ENCODE measurements at regions of chr1 and their contacts with region 1.

Region 1: GRCh38 chr1:2586154-2587070 is at the start of gene PRXL2B:
- DNase-seq: peak; percentile 100
- ATAC-seq: peak; percentile 75
- H3K4me3 Mint-ChIP-seq: peak within 1 kb of the TSS; percentile 95
- H3K27ac Mint-ChIP-seq: peak within 1 kb of the TSS; percentile 96
- H3K4me1 Mint-ChIP-seq: peaks cover 30% of the 10 kb centered on the region
- H3K27me3 Mint-ChIP-seq: no peaks in the 10 kb centered on the region
- total RNA-seq, gene PRXL2B: 37.3 to 37.6 TPM

Region 2: GRCh38 chr1:2412519-2413233 is 173.7 kb before region 1 on chr1 and contains the start of gene PEX10:
- POLR2A ChIA-PET with region 1: interaction called, 18 read pairs
- DNase-seq: peak; percentile 100
- ATAC-seq: peak; percentile 75
- H3K4me3 Mint-ChIP-seq: peak within 1 kb of the TSS; percentile 92
- H3K27ac Mint-ChIP-seq: peak within 1 kb of the TSS; percentile 90
- H3K4me1 Mint-ChIP-seq: peaks cover 29% of the 10 kb centered on the region
- H3K27me3 Mint-ChIP-seq: no peaks in the 10 kb centered on the region
- total RNA-seq, gene PEX10: 9.6 to 9.9 TPM

Region 3: GRCh38 chr1:2492056-2492455 is 94.4 kb before region 1 on chr1:
- POLR2A ChIA-PET with region 1: no interaction called
- DNase-seq: no peak
- ATAC-seq: no peak
- H3K4me3 Mint-ChIP-seq: no peak overlapping the region
- H3K27ac Mint-ChIP-seq: no peak overlapping the region
- H3K4me1 Mint-ChIP-seq: peaks cover 11% of the 10 kb centered on the region
- H3K27me3 Mint-ChIP-seq: no peaks in the 10 kb centered on the region

Region 4: DNA sequence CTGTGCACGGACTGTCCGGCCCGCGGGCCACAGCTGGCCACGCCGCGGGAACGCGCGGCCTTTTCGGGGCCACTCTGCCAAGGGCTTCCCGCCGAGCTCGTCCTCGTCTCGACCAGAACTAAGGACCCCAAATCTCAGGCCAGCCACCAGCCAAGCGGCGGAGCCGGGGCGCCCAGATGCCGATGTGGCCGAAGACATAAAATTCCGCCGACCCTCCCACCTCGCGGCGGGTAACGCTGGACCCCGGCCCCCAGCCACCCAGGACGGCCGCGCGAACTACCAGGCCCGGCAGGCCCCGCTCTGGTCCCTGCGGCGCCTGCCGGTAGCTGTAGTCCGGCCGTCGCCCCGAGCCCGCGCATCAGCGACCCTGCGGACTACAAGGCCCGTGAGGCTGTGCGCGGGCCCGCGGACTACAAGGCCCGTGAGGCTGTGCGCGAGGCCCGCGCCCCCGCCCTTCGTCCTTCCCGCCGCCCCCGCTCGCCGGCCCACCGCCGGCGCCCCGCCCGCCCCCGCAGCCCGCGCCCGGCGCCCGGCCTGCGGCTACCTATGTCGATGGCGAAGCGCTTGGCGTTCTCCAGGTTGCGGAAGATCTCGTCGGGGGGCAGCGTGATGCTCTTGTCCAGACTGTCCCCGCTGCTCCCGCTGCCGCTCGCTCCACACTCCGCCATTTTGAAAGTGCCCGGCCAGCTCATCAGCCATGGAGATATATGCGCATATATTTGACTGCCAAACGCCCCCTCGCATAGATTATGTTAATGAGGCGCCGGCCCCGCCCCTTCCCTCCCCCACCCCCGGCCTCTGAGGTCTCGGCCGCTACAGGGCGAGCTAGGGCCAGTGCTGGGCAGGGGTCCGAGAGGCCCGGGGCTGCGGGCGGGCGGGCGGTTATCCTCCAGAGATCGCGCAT is 60.2 kb before region 1 on chr1 and contains the start of gene PANK4:
- POLR2A ChIA-PET with region 1: interaction called, 38 read pairs
- DNase-seq: peak; percentile 92
- ATAC-seq: peak; percentile 85
- H3K4me3 Mint-ChIP-seq: peak within 1 kb of the TSS; percentile 86
- H3K27ac Mint-ChIP-seq: peak within 1 kb of the TSS; percentile 96
- H3K4me1 Mint-ChIP-seq: peaks cover 35% of the 10 kb centered on the region
- H3K27me3 Mint-ChIP-seq: peaks cover 16% of the 10 kb centered on the region
- total RNA-seq, gene PANK4: 86.5 to 88.9 TPM

Region 5: DNA sequence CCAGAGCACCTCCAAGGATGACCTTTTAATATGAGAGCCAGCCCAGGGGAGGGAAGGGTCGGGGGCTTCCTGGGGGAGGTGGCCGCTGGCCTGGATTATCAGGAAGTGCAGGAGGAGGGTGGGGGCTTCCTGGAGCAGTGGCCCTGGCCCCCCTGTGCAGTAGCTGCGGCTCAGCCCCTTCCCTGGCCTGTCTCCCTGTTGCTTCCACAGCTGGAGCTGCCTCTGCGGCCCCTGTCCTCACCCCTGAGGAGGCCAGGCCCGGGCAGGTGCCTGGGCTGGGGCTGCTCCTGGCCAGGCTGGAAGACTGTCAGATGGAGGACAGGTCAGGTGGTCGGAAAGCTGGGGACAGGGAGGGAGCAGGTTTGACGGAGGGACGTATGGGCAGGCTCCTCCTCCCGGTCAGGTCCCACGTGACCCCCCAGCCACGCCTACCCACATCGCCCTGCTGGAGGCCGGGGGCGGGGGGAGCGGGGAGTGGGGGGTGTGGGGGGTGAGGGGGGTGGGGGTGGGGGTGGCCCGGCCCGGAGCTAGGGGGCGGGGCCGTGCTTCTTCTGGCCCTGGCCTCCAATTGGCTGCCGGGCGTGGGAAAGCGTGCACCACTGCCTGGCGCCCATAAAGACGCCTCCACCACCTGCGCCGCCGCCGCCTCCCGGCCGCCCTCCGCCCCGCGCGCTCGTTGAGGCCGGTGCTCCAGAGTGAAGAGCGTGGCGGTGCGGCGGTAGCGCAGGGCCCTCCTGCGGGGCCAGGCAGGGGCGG is 40.5 kb before region 1 on chr1:
- POLR2A ChIA-PET with region 1: interaction called, 97 read pairs
- DNase-seq: peak; percentile 91
- ATAC-seq: peak; percentile 37
- H3K4me3 Mint-ChIP-seq: peak overlapping the region; percentile 91
- H3K27ac Mint-ChIP-seq: peak overlapping the region; percentile 96
- H3K4me1 Mint-ChIP-seq: peaks cover 9% of the 10 kb centered on the region
- H3K27me3 Mint-ChIP-seq: peaks cover 5% of the 10 kb centered on the region

Region 6: DNA sequence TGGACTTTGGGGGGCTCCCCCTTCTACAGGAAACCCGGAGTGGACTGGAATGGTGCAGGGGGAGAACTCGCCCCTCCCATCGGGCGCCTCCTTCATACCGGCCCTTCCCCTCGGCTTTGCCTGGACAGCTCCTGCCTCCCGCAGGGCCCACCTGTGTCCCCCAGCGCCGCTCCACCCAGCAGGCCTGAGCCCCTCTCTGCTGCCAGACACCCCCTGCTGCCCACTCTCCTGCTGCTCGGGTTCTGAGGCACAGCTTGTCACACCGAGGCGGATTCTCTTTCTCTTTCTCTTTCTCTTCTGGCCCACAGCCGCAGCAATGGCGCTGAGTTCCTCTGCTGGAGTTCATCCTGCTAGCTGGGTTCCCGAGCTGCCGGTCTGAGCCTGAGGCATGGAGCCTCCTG is 30.1 kb before region 1 on chr1 and contains the start of gene TNFRSF14:
- POLR2A ChIA-PET with region 1: interaction called, 231 read pairs
- DNase-seq: peak; percentile 79
- ATAC-seq: peak; percentile 68
- H3K4me3 Mint-ChIP-seq: peak within 1 kb of the TSS; percentile 98
- H3K27ac Mint-ChIP-seq: peak within 1 kb of the TSS; percentile 99
- H3K4me1 Mint-ChIP-seq: peaks cover 21% of the 10 kb centered on the region
- H3K27me3 Mint-ChIP-seq: no peaks in the 10 kb centered on the region
- total RNA-seq, gene TNFRSF14: 131 to 134 TPM

Region 7: DNA sequence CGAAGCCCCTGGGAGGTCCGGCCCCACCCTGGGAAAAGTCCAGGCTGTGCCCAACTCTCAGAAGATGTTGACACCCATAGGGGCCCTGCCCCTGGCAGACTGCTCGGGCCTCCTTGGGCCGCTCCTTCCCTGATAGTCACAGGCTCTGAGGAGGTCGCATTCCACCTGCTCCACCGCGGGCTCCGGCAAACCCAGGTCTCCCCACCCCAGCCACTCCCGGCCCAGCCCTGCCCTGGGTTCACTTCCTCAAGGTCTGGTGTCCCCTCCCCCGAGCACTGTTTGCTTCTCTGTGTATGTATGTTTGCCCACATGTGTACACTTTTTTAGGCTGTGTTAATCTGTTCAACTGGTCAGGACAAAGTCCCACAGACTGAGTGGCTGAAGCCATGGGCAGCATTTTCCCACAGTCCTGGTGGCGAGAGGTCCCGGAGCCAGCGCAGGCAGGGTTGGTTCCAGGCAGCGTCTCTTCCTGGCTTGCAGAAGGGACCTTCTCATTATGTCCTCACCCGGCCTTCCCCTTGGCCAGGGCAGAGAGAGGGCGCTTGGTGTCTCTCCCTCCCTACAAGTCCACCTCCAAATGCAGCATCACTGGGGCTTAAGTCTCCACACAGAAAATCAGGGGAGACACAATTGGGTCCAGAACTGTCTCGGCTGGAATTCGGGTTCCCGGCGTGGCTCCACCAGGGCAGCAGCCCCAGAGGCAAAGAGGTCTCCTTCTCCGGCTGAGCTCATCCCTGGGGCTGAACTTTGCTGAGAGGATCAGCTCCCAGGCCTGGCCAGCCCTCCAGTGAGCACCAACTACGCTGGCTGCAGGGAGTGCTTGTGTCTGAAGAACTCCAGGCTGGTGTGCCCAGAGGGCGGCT is 10.4 kb before region 1 on chr1:
- POLR2A ChIA-PET with region 1: interaction called, 10 read pairs
- DNase-seq: no peak
- ATAC-seq: no peak
- H3K4me3 Mint-ChIP-seq: no peak overlapping the region
- H3K27ac Mint-ChIP-seq: peak overlapping the region; percentile 67
- H3K4me1 Mint-ChIP-seq: peaks cover 28% of the 10 kb centered on the region
- H3K27me3 Mint-ChIP-seq: no peaks in the 10 kb centered on the region

Region 8: GRCh38 chr1:2642560-2643413 is 56.4 kb after region 1 on chr1:
- POLR2A ChIA-PET with region 1: interaction called, 10 read pairs
- DNase-seq: peak; percentile 97
- ATAC-seq: peak; percentile 85
- H3K4me3 Mint-ChIP-seq: peak overlapping the region; percentile 95
- H3K27ac Mint-ChIP-seq: peak overlapping the region; percentile 90
- H3K4me1 Mint-ChIP-seq: peaks cover 7% of the 10 kb centered on the region
- H3K27me3 Mint-ChIP-seq: peaks cover 3% of the 10 kb centered on the region